Aorta (tissue), 5 donors: ENCODE measurements at regions of chr7 and their contacts with region 1.

Region 1: GRCh38 chr7:81499262-81500116 is 270.4 kb downstream of the HGF start:
- DNase-seq: no peak
- ATAC-seq: peak; percentile 92
- H3K4me3 ChIP-seq: no peak overlapping the region
- H3K27ac ChIP-seq: no peak overlapping the region
- H3K4me1 ChIP-seq: no peaks in the 10 kb centered on the region
- H3K27me3 ChIP-seq: no peaks in the 10 kb centered on the region

Region 2: GRCh38 chr7:81415181-81415580 is 84.3 kb before region 1 on chr7:
- intact Hi-C with region 1: no loop called
- DNase-seq: no peak
- ATAC-seq: no peak
- H3K4me3 ChIP-seq: no peak overlapping the region
- H3K27ac ChIP-seq: no peak overlapping the region
- H3K4me1 ChIP-seq: no peaks in the 10 kb centered on the region
- H3K27me3 ChIP-seq: no peaks in the 10 kb centered on the region

Region 3: DNA sequence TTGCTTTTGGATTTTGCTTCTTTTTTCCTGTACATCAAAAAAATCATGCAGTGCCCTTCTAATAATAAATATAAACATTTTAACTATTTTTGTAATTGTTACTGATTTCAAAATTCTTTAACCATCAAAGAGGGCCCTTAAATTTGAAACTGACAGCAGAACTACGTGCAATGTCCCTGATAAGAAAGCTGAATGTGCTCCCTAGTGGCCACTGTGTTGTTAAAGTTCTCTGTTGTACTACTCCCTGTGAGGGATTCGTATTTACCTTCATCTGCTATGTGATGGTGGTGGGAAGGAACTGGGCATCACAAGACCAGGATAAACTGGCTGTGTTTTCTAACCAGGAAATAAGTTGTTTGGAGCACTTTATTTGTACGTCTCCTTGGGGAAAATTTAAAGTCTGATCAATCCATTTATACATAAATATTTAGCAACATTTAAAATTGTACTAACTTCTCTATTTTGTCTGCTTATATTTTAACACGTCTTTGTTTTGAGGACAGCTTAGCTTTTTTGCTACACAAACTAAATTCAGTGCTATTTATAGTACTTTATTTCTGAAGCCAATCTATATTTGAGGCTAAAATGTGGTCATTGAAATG is 52.0 kb before region 1 on chr7:
- intact Hi-C with region 1: no loop called
- DNase-seq: no peak
- ATAC-seq: no peak
- H3K4me3 ChIP-seq: no peak overlapping the region
- H3K27ac ChIP-seq: no peak overlapping the region
- H3K4me1 ChIP-seq: no peaks in the 10 kb centered on the region
- H3K27me3 ChIP-seq: no peaks in the 10 kb centered on the region

Region 4: DNA sequence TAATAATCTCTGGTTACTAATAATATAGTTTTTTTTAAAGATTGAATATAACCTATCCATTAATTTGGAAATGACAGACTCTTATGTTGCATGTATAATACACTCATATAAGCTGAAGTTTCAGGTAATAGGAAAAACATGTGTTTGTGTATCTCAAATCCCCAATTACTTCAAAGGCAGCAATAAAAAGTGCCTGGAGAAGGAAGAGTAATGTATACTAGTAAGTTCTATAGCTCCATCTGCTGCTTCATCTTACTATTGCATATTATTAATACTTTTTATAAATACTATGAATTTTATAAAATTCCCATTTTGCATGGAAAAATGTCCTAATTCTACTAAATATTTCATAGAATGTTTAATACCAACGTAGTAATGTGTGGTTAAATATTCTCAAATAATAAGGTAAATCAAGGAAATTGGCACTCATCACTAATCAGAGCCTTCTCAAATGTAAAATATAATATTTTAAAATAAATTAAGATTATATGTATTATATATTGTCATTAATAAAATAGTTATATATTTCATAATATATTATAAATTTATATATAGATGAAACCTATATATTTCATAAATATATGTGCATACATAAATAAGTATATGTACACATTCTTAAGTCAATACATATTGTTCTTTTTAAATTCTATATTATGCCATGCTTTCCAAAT is 41.5 kb before region 1 on chr7:
- intact Hi-C with region 1: no loop called
- DNase-seq: no peak
- ATAC-seq: no peak
- H3K4me3 ChIP-seq: no peak overlapping the region
- H3K27ac ChIP-seq: no peak overlapping the region
- H3K4me1 ChIP-seq: no peaks in the 10 kb centered on the region
- H3K27me3 ChIP-seq: no peaks in the 10 kb centered on the region

Region 5: DNA sequence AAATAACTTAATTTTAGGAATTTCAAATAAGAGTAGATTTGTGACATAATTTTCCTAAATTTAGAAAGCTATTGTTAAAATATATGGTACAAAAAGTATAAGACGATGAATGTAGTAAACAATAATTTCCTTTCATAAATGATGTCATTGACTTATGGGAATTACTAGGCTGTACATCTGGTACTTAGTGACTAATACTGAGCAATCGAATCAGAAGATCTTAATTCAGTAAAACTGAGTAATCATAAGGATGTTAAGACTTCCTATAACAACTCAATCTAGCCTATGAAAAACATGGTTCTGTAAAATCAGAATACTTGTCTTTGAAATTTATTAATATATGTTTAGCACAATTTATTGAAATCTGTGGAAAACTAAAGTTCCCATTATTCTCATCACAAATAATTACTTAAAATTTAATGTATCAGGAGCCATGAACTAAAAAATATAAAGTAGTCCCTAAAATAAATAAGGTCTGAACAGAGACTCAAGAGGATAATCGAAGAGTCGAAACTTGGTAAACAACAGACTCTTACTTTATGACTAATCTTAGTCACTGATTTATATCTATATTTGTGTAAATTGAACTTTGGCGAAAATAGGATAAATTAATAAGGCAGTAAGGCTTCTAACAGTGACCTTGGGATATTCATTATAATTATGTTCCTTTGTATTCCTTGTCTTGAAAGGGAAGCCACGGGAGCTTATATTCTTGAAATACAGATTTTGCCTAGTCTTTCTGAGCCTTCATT is 128.2 kb after region 1 on chr7:
- intact Hi-C with region 1: loop called in 1 of 2 experiments (anchors 5 kb)
- DNase-seq: no peak
- ATAC-seq: no peak
- H3K4me3 ChIP-seq: no peak overlapping the region
- H3K27ac ChIP-seq: no peak overlapping the region
- H3K4me1 ChIP-seq: no peaks in the 10 kb centered on the region
- H3K27me3 ChIP-seq: no peaks in the 10 kb centered on the region

Region 6: DNA sequence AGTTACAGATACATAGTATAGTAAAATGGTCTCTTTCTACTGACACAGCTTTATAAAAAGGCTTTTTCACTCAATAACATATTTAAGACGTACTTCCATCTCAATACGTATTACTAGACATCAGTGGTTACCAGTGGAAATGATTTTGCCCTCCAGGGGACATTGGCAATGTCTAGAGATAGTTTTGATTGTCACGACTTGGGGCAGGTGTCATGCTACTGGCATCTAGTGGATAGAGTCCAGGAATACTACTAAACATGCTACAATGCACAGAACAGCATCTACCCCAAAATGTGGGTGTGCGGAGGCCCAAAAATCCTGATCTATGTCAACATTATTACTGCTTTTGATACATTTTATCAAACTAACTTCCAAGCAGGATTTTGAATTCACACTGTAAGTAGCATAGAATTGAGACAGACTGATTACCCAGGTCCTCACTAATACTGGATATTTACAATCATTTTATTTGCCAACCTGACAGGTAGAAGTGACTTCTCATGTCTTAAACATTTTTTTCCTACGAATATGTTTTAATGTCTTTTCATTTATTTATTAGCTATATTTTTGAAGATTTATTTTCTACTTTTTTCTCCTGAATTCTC is 216.6 kb after region 1 on chr7:
- intact Hi-C with region 1: loop called (anchors 5 kb)
- DNase-seq: no peak
- ATAC-seq: peak; percentile 57
- H3K4me3 ChIP-seq: no peak overlapping the region
- H3K27ac ChIP-seq: no peak overlapping the region
- H3K4me1 ChIP-seq: no peaks in the 10 kb centered on the region
- H3K27me3 ChIP-seq: no peaks in the 10 kb centered on the region

Region 7: GRCh38 chr7:81769891-81770727 is 270.6 kb after region 1 on chr7 and contains the start of gene HGF:
- intact Hi-C with region 1: loop called in 1 of 2 experiments (anchors 10 kb)
- DNase-seq: peak; percentile 83 to 86
- ATAC-seq: peak; percentile 87
- H3K4me3 ChIP-seq: peak within 1 kb of the TSS; percentile 21 to 59
- H3K27ac ChIP-seq: peak within 1 kb of the TSS in 1 of 2 donors; percentile 50
- H3K4me1 ChIP-seq: peaks cover 0 to 4% of the 10 kb centered on the region in 2 donors
- H3K27me3 ChIP-seq: no peaks in the 10 kb centered on the region
- total RNA-seq, gene HGF: 20.7 to 55.9 TPM

Region 8: DNA sequence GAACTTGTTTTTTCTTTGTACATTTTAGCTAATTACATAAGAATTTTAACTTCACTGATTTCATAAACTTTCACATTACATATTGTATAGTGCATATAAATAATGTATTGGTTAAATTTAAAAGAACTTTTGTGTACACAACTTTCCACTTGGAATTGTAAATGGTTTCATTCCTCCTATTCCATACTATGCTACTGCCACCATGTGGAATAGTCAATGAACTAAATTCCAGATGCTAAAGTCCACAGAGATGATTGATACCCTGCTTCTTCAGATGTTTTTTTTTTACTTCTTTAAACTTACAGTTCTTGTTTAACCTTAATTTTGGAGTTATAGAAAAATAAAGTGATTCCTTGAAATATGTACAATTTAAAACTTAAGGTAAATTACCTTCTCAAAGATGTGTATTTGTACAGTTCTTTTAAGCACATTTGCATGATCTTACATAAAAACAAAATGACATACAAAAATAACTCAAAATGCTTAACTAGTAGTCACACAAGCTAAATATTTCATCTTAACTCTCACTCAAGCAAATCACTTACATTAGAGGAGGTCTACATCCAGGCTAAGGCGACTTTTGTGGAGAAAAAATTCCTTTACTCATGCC is 518.0 kb after region 1 on chr7:
- intact Hi-C with region 1: loop called (anchors 2 to 5 kb)
- DNase-seq: no peak
- ATAC-seq: no peak
- H3K4me3 ChIP-seq: no peak overlapping the region
- H3K27ac ChIP-seq: no peak overlapping the region
- H3K4me1 ChIP-seq: peaks cover 0 to 2% of the 10 kb centered on the region in 2 donors
- H3K27me3 ChIP-seq: no peaks in the 10 kb centered on the region